ENCODE measurements at regions of chr1 and their contacts with region 1.

Region 1: DNA sequence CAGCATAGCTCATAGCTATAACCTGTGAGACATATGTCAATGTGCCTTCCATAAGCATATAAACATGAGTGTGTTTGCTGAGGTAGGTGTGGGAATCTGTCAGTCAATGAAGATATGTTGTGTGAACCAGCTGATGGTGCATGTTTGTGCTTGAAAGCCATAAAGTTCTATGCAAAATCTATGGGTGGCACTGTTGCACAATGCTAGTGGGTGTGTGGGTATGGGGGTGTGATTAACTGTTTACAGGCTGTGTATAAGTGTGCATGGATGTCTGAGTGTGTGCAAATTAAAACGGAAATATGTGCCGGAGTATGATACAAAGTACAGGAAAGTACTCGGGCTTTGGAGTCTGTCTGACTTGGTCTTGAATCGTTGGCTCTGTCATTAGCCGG is 1.0 kb upstream of the ATP2B4 start:
- DNase-seq: peak; percentile 75
- H3K4me3 Mint-ChIP-seq: peak overlapping the region; percentile 98
- H3K27ac Mint-ChIP-seq: peak overlapping the region; percentile 89
- H3K4me1 Mint-ChIP-seq: peaks cover 67% of the 10 kb centered on the region
- H3K27me3 Mint-ChIP-seq: no peaks in the 10 kb centered on the region

Region 2: GRCh38 chr1:203448521-203449061 is 177.0 kb before region 1 on chr1:
- CTCF ChIA-PET with region 1: no interaction called
- POLR2A ChIA-PET with region 1: no interaction called
- DNase-seq: no peak
- H3K4me3 Mint-ChIP-seq: no peak overlapping the region
- H3K27ac Mint-ChIP-seq: no peak overlapping the region
- H3K4me1 Mint-ChIP-seq: no peaks in the 10 kb centered on the region
- H3K27me3 Mint-ChIP-seq: peaks cover 45% of the 10 kb centered on the region

Region 3: GRCh38 chr1:203555076-203555475 is 70.5 kb before region 1 on chr1:
- CTCF ChIA-PET with region 1: no interaction called
- POLR2A ChIA-PET with region 1: no interaction called
- DNase-seq: no peak
- H3K4me3 Mint-ChIP-seq: no peak overlapping the region
- H3K27ac Mint-ChIP-seq: no peak overlapping the region
- H3K4me1 Mint-ChIP-seq: no peaks in the 10 kb centered on the region
- H3K27me3 Mint-ChIP-seq: peaks cover 11% of the 10 kb centered on the region

Region 4: DNA sequence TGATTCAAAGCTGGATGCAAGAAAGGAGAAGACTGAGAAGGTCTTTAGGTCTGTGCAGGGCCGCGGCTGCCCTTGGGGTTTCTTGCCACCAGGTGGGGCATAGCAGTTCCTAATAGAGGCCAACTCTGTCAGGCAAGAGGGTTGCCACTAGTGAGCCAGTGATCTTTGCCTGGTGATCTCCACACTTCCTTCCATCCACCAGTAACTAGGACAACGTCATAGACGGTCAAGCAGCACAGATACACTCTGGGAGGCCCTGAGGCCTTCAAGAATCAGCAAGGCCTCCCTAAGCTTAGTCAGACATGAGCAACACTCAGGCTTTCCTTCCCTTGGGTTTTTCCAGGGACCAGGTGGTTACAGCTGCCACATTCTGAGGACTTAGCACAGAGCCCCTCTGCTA is 31.9 kb before region 1 on chr1:
- CTCF ChIA-PET with region 1: interaction called, 25 read pairs
- POLR2A ChIA-PET with region 1: interaction called, 11 read pairs
- DNase-seq: peak; percentile 72
- H3K4me3 Mint-ChIP-seq: no peak overlapping the region
- H3K27ac Mint-ChIP-seq: no peak overlapping the region
- H3K4me1 Mint-ChIP-seq: peaks cover 26% of the 10 kb centered on the region
- H3K27me3 Mint-ChIP-seq: peaks cover 4% of the 10 kb centered on the region

Region 5: GRCh38 chr1:203612932-203613682 is 12.5 kb before region 1 on chr1:
- CTCF ChIA-PET with region 1: interaction called, 10 read pairs
- POLR2A ChIA-PET with region 1: interaction called, 101 read pairs
- DNase-seq: peak; percentile 47
- H3K4me3 Mint-ChIP-seq: no peak overlapping the region
- H3K27ac Mint-ChIP-seq: peak overlapping the region; percentile 70
- H3K4me1 Mint-ChIP-seq: peaks cover 58% of the 10 kb centered on the region
- H3K27me3 Mint-ChIP-seq: no peaks in the 10 kb centered on the region

Region 6: GRCh38 chr1:203649999-203650855 is 24.6 kb after region 1 on chr1:
- CTCF ChIA-PET with region 1: interaction called, 44 read pairs
- POLR2A ChIA-PET with region 1: interaction called, 188 read pairs
- DNase-seq: peak; percentile 65
- H3K4me3 Mint-ChIP-seq: peak overlapping the region; percentile 67
- H3K27ac Mint-ChIP-seq: peak overlapping the region; percentile 98
- H3K4me1 Mint-ChIP-seq: peaks cover 81% of the 10 kb centered on the region
- H3K27me3 Mint-ChIP-seq: no peaks in the 10 kb centered on the region

Region 7: GRCh38 chr1:203682473-203683383 is 57.1 kb after region 1 on chr1:
- CTCF ChIA-PET with region 1: interaction called, 27 read pairs
- POLR2A ChIA-PET with region 1: interaction called, 18 read pairs
- DNase-seq: peak; percentile 80
- H3K4me3 Mint-ChIP-seq: peak overlapping the region; percentile 0
- H3K27ac Mint-ChIP-seq: peak overlapping the region; percentile 81
- H3K4me1 Mint-ChIP-seq: peaks cover 55% of the 10 kb centered on the region
- H3K27me3 Mint-ChIP-seq: no peaks in the 10 kb centered on the region

Region 8: DNA sequence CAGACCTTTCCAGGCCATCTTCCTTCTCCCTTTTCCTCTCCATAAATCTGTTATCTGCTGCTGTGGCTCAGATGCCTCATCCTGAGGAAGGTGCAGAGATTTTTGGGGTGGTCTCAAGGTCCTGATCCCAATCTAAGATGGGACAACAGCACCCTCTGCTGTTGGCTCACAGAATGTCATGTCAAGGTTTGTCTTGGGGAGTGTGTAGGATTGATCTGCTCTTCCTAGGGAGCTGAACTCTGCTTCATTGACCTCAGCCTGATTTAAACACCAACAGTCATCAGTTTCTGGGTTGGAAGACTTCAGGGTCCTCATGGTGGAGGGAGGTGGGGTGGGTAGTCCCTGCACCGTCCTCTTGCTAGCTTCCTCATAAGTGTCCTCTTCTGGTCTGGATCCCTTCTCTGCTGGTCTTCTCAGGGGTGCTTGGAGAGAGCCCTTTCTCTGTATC is 76.5 kb after region 1 on chr1:
- CTCF ChIA-PET with region 1: interaction called, 64 read pairs
- POLR2A ChIA-PET with region 1: interaction called, 23 read pairs
- DNase-seq: peak; percentile 65
- H3K4me3 Mint-ChIP-seq: no peak overlapping the region
- H3K27ac Mint-ChIP-seq: peak overlapping the region; percentile 10
- H3K4me1 Mint-ChIP-seq: peaks cover 22% of the 10 kb centered on the region
- H3K27me3 Mint-ChIP-seq: no peaks in the 10 kb centered on the region

Measured in activated CD4-positive, alpha-beta memory T cell treated with anti-CD3 and anti-CD28 coated beads, Interleukin-2, amount 10 ng/mL, durations not matched to agents 7 days and 5 days (primary cell).